ENCODE measurements at regions of chr15 and their contacts with region 1.

Region 1: DNA sequence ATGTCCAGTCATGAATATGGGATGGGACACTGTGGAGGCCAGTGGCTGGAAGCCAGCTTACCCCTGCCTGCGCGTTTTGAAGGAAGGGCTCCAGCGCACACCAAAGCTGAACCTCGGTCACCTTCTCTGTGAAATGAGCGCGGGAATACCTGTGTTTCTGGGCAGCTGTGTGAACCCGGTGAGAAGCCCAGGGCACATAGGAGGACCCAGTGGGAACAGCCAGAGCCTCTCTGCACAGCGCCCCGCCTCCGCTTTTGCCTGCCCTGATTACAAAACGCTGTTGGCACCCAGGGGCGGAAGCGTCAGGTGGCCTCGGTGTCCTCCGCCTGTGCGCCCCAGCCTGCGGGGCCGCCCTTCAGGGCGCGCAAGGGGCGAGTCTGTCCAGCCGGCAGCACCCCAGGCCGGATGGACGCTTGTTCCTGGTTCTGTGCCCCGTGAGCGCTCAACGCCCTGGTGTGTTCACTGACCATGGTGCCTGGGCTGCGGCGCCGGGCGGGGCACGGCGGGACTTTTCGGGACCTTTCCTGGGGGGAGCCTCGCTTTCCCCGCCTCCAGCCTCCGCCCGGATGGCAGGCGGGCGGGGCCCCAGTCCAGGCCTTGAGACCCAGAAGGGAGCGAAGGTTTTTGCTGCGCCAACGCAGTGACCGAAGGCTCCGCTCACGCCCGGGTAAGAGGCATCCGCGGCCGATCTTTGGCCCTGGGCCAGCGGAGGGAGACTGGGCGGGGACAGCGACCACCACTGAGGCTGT is at the start of gene SQOR:
- DNase-seq: peak; percentile 85
- ATAC-seq: peak; percentile 76
- H3K4me3 ChIP-seq: peak within 1 kb of the TSS; percentile 88
- H3K27ac ChIP-seq: peak within 1 kb of the TSS; percentile 82
- H3K4me1 ChIP-seq: peaks cover 42% of the 10 kb centered on the region
- H3K27me3 ChIP-seq: no peaks in the 10 kb centered on the region
- CTCF ChIP-seq: no peak
- total RNA-seq, gene SQOR: 86.1 and 99.0 TPM in 2 replicates

Region 2: DNA sequence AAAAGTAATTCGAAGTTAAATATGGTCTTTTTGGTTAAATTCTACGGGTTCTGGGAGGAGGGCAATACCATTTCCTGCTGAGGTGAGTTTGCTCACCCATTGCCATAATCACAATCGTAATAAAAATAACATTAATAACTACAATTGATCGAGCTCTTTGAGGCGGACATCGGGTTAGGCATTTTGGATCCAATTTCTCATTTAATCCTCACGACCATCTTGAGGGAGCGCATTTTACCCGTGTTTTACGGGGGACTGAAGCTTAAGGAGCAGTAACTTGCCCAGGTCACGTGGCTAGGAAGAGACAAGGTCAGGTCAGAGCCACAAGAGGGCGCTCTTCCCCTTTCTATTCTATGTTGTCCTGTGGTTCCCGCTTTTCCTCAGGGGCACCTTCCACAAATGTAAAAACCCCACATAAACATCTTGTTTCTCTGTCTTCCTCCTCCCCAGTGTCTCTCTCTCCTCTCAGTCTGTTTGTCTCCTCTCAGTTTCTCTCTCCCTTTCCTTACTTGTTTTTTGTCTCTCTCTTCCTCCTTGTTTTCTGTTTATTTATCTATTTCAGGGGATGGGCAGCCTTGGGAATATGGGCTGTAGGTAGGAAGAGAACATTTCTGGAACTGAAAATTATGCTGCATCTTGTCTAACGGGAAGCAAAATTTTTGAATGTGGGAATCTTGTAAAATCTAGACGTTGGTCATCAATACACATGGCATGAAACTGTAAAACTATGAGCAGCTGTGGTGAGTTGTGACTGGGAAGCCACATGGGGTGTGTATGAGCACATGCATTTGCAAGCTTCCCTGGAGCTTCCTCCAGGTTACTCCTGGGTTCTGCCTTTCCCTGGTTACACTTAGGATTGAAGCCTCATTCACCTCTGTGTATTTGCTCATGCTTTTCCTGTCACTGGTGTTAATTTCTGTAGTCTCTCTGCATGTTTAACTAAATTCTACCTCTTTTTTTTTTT is 71.2 kb after region 1 on chr15:
- CTCF ChIA-PET with region 1: interaction called, 3 read pairs
- POLR2A ChIA-PET with region 1: no interaction called
- intact Hi-C with region 1: loop called (anchors 2 kb)
- DNase-seq: peak; percentile 86
- ATAC-seq: peak; percentile 92
- H3K4me3 ChIP-seq: peak overlapping the region; percentile 73
- H3K27ac ChIP-seq: no peak overlapping the region
- H3K4me1 ChIP-seq: peaks cover 4% of the 10 kb centered on the region; the same call in 1 of the 2 replicates
- H3K27me3 ChIP-seq: no peaks in the 10 kb centered on the region
- CTCF ChIP-seq: peak; percentile 78

Region 3: DNA sequence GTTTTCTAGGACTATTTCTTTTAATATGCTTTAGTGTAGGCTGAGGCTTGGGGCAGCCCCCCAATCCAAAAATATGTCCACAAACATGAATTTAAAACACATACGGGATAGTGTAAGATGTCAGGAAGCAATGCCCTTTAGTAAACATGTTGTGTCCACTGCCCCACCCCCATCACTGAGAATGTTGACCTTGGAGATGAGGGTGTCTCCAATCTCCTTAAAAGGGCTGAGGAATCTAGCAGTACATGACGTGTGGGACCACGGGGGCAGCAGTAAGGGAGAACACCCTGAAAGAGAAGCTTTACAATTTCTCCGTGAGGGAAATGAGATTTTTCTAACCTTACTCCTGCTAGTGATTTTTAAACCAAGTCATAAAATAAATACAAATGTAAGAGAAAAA is 84.9 kb after region 1 on chr15:
- CTCF ChIA-PET with region 1: no interaction called
- POLR2A ChIA-PET with region 1: no interaction called
- intact Hi-C with region 1: no loop called
- DNase-seq: no peak
- ATAC-seq: no peak
- H3K4me3 ChIP-seq: no peak overlapping the region
- H3K27ac ChIP-seq: no peak overlapping the region
- H3K4me1 ChIP-seq: peaks cover 7% of the 10 kb centered on the region
- H3K27me3 ChIP-seq: no peaks in the 10 kb centered on the region
- CTCF ChIP-seq: no peak